SK-N-SH (cell line): ENCODE measurements at regions of chr17 and their contacts with region 1.

Region 1: GRCh38 chr17:81871387-81872230 is 472 bp upstream of the ARHGDIA start:
- DNase-seq: peak; percentile 100
- H3K4me3 ChIP-seq: peak overlapping the region; percentile 82 to 83
- H3K27ac ChIP-seq: peak overlapping the region; percentile 95
- H3K4me1 ChIP-seq: peaks cover 24 to 40% of the 10 kb centered on the region in 2 experiments; a peak in 3 of 4 replicates
- H3K27me3 ChIP-seq: no peaks in the 10 kb centered on the region
- CTCF ChIP-seq: peak; percentile 37; the same call in 1 of the 2 replicates
- EP300 ChIP-seq: 0 out of 4 replicates have a peak, but pooled peaks of 1 of the 2 experiments have one; percentile 6
- RAD21 ChIP-seq: no peak

Region 2: DNA sequence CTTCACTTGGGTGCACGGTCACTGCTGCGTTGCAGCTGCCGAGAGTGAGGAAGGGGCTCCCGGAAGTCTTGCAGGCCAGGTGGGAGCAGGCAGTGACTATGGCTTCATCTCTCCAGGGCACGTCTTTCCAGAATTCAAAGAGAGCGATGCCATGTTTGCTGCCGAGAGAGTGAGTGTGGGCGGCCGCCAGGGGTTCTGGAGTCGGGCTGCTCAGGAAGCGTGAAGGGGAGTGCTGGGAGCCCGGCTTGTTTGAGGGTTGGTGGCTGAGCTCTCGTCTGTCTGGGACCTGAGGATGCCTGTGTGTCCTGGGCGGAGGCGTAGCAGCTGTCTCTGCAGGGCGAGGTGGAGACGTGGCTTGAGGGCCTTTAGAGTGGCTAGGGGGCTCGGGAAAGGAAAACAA is 181.5 kb before region 1 on chr17:
- CTCF ChIA-PET with region 1: no interaction called
- POLR2A ChIA-PET with region 1: no interaction called
- DNase-seq: no peak
- H3K4me3 ChIP-seq: no peak overlapping the region
- H3K27ac ChIP-seq: no peak overlapping the region
- H3K4me1 ChIP-seq: peaks cover 5 to 6% of the 10 kb centered on the region in 2 experiments; a peak in 1 of 4 replicates
- H3K27me3 ChIP-seq: no peaks in the 10 kb centered on the region
- CTCF ChIP-seq: no peak
- EP300 ChIP-seq: no peak
- RAD21 ChIP-seq: no peak

Region 3: DNA sequence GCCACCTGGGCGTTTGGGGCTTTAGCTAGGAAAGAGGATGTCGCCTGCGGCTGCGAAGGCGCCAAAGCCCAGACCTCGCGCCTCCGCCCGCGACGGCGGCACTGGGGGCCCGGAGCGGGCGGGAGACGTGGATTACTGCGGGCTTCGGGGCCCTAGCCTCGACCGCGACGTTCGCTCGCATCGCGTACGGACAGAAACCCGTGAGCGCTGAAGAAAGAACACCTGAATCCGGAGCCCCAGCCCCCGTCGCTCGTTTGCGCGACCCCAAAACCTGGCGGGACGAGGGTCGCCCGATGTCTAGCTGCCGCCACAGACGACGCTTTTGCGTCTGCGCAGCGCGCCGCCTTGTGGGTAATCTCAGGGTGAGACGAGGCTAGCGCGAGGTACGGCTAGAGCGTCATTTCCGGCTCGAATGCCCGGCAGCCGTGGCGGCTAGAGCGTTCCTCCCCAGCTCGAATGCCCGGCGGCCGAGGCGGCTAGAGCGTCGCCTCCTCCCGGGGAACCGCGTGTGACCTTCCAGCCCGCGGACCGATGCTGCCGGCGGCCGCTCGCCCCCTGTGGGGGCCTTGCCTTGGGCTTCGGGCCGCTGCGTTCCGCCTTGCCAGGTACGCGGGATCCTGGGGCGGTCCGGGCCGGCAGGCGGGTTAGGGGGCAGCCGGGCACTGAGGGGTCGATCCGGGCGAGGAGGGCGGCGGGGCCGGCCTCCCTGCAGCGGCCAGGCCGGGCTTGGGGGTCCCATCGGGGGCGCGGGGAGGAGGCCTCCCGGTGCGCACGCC is 168.4 kb before region 1 on chr17 and contains the start of gene MRPL12:
- CTCF ChIA-PET with region 1: interaction called, 10 read pairs
- POLR2A ChIA-PET with region 1: interaction called, 9 read pairs
- DNase-seq: peak; percentile 100
- H3K4me3 ChIP-seq: peak within 1 kb of the TSS; percentile 86 to 95
- H3K27ac ChIP-seq: peak within 1 kb of the TSS; percentile 78 to 84
- H3K4me1 ChIP-seq: peaks cover 14 to 29% of the 10 kb centered on the region in 2 experiments; a peak in 3 of 4 replicates
- H3K27me3 ChIP-seq: no peaks in the 10 kb centered on the region
- CTCF ChIP-seq: no peak
- EP300 ChIP-seq: no peak
- RAD21 ChIP-seq: no peak
- polyA plus RNA-seq, gene MRPL12: 255 and 322 TPM in 2 replicates

Region 4: GRCh38 chr17:81733507-81734404 is 137.9 kb before region 1 on chr17:
- CTCF ChIA-PET with region 1: interaction called, 24 read pairs
- POLR2A ChIA-PET with region 1: interaction called, 5 read pairs
- DNase-seq: peak; percentile 100
- H3K4me3 ChIP-seq: no peak overlapping the region; a peak in 1 of 4 replicates
- H3K27ac ChIP-seq: no peak overlapping the region
- H3K4me1 ChIP-seq: peaks cover 0 to 5% of the 10 kb centered on the region in 2 experiments; a peak in 1 of 4 replicates
- H3K27me3 ChIP-seq: no peaks in the 10 kb centered on the region; the same call in 1 of the 2 replicates
- CTCF ChIP-seq: peak; percentile 96
- EP300 ChIP-seq: no peak
- RAD21 ChIP-seq: peak; percentile 100

Region 5: GRCh38 chr17:81833160-81833920 is 38.3 kb before region 1 on chr17 and contains the start of gene MCRIP1:
- CTCF ChIA-PET with region 1: interaction called, 10 read pairs
- POLR2A ChIA-PET with region 1: interaction called, 13 read pairs
- DNase-seq: peak; percentile 100
- H3K4me3 ChIP-seq: peak within 1 kb of the TSS; percentile 77 to 97
- H3K27ac ChIP-seq: peak within 1 kb of the TSS; percentile 86 to 90
- H3K4me1 ChIP-seq: peaks cover 0 to 27% of the 10 kb centered on the region in 2 experiments; a peak in 3 of 4 replicates
- H3K27me3 ChIP-seq: no peaks in the 10 kb centered on the region
- CTCF ChIP-seq: no peak
- EP300 ChIP-seq: no peak
- RAD21 ChIP-seq: no peak
- polyA plus RNA-seq, gene MCRIP1: 120 and 156 TPM in 2 replicates

Region 6: GRCh38 chr17:81860756-81861518 is 10.7 kb before region 1 on chr17:
- CTCF ChIA-PET with region 1: interaction called, 13 read pairs
- POLR2A ChIA-PET with region 1: interaction called, 16 read pairs
- DNase-seq: peak; percentile 100
- H3K4me3 ChIP-seq: peak overlapping the region; percentile 77 to 95
- H3K27ac ChIP-seq: peak overlapping the region; percentile 90 to 92
- H3K4me1 ChIP-seq: peaks cover 28 to 37% of the 10 kb centered on the region in 2 experiments
- H3K27me3 ChIP-seq: no peaks in the 10 kb centered on the region
- CTCF ChIP-seq: no peak
- EP300 ChIP-seq: no peak; a peak in 1 of 4 replicates
- RAD21 ChIP-seq: no peak

Region 7: GRCh38 chr17:81911277-81911961 is 39.8 kb after region 1 on chr17 and contains the start of gene PCYT2:
- CTCF ChIA-PET with region 1: interaction called, 20 read pairs
- POLR2A ChIA-PET with region 1: interaction called, 3 read pairs
- DNase-seq: peak; percentile 100
- H3K4me3 ChIP-seq: peak within 1 kb of the TSS; percentile 85 to 96
- H3K27ac ChIP-seq: peak within 1 kb of the TSS in 1 of 2 experiments; percentile 44; a peak in 2 of 4 replicates
- H3K4me1 ChIP-seq: peaks cover 8 to 19% of the 10 kb centered on the region in 2 experiments; a peak in 2 of 4 replicates
- H3K27me3 ChIP-seq: no peaks in the 10 kb centered on the region
- CTCF ChIP-seq: peak; percentile 10; the same call in 1 of the 2 replicates
- EP300 ChIP-seq: no peak
- RAD21 ChIP-seq: no peak
- polyA plus RNA-seq, gene PCYT2: 46.2 and 54.1 TPM in 2 replicates

Region 8: DNA sequence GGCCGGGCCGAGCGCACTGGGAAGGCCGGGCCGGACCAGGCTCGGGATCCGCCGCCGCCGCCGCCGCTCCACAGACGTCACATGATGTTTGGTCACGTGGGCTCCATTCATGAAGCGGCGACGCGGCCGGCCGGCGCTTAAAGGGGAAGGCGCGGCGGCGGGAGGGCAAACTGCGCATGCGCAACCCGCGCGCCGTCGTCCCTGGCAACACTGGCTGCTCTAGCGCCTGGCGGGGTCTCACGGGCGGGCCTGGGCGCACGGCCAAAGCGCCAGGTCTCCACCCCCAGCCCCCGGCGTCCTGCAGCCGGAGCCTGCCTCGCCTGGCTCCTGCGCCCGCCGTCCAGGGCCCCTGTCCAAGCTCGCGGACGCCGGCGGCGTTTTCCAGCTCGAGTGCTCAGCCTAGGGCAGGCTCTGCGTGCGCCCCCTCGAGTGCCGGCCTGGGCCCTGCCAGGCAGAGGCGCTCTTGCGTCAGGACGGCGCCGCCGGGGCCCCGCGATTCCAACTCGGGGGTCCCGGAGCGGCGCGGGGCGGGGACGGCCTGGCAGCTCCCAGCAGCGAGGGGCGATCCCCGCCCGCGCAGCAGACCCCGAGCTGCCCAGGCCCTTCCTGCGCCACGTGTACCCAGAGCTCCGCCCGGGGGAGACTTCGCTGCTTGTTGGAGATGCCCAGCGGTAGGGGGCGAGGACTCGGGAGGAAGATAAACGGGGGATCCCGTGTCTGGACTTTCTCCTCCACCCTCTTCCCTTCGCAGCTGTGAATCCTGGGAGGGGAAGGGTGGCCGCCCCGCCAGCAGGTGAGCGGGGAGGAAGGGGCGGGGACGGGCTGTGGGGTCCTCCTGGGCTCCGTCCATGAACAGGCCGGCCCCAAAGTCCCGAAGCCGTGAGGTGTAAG is 56.3 kb after region 1 on chr17 and contains the start of gene MAFG:
- CTCF ChIA-PET with region 1: interaction called, 22 read pairs
- POLR2A ChIA-PET with region 1: interaction called, 9 read pairs
- DNase-seq: peak; percentile 100
- H3K4me3 ChIP-seq: peak within 1 kb of the TSS; percentile 92
- H3K27ac ChIP-seq: peak within 1 kb of the TSS; percentile 72 to 85
- H3K4me1 ChIP-seq: peaks cover 20 to 31% of the 10 kb centered on the region in 2 experiments; a peak in 2 of 4 replicates
- H3K27me3 ChIP-seq: no peaks in the 10 kb centered on the region
- CTCF ChIP-seq: peak; percentile 63
- EP300 ChIP-seq: peak in 1 of 2 experiments; percentile 44; a peak in 1 of 4 replicates
- RAD21 ChIP-seq: 0 out of 2 replicates have a peak, but pooled peaks have one; percentile 26
- polyA plus RNA-seq, gene MAFG: 30.3 and 38.7 TPM in 2 replicates

Region 9: GRCh38 chr17:82087961-82088837 is 216.6 kb after region 1 on chr17:
- CTCF ChIA-PET with region 1: no interaction called
- POLR2A ChIA-PET with region 1: no interaction called
- DNase-seq: no peak
- H3K4me3 ChIP-seq: no peak overlapping the region
- H3K27ac ChIP-seq: no peak overlapping the region
- H3K4me1 ChIP-seq: no peaks in the 10 kb centered on the region
- H3K27me3 ChIP-seq: no peaks in the 10 kb centered on the region
- CTCF ChIP-seq: no peak
- EP300 ChIP-seq: no peak
- RAD21 ChIP-seq: no peak